ENCODE measurements at regions of chr6 and their contacts with region 1.

Region 1: GRCh38 chr6:159789377-159790148 is at the start of gene TCP1:
- H3K4me3 ChIP-seq: peak within 1 kb of the TSS; percentile 98
- H3K27ac ChIP-seq: peak within 1 kb of the TSS; percentile 66
- H3K4me1 ChIP-seq: peaks cover 8% of the 10 kb centered on the region
- CTCF ChIP-seq: no peak

Region 2: DNA sequence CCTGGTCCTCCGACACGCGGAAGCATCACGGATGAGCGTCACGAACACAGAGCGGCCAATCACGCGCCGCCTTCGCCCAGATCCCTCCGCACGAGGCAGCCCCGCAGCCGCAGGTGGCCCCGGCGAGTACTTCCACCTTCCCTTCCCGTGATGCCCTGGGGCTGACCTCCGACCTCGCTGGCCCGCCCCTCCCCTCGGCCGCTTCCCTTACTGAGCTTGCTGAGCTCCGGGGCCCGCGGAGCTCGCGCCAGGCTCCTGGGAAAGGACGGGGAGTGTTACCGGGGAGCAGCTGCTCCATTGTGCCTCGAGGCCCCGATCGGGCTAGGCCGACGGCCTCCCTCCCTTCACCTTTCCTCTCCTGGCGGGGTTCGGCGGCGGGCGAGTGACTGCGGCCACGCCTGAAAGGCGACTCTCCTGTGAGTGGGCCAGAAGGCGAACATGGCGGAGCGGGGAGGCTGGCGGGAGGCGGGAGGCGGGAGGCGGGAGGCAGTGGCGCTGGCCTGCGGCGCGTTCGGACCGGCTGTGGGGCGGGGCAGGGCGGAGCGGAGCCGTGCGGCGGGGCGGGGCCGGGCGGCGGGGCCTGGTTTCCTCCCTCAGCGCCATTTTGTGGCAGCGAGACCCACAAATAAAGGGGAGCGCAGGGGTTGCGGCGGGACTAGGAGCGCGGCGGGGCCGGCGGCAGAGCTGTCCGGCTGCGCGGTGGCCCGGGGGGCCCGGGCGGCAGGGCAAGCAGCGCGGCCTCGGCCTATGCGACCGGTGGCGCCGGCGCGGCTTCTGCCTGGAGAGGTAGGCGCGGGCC is 62.4 kb before region 1 on chr6 and contains the start of gene WTAP:
- CTCF ChIA-PET with region 1: no interaction called
- POLR2A ChIA-PET with region 1: interaction called, 115 read pairs
- H3K4me3 ChIP-seq: peak within 1 kb of the TSS; percentile 91
- H3K27ac ChIP-seq: peak within 1 kb of the TSS; percentile 99
- H3K4me1 ChIP-seq: peaks cover 7% of the 10 kb centered on the region; the same call in 1 of the 2 replicates
- CTCF ChIP-seq: peak; percentile 59; the same call in 1 of the 2 replicates

Region 3: DNA sequence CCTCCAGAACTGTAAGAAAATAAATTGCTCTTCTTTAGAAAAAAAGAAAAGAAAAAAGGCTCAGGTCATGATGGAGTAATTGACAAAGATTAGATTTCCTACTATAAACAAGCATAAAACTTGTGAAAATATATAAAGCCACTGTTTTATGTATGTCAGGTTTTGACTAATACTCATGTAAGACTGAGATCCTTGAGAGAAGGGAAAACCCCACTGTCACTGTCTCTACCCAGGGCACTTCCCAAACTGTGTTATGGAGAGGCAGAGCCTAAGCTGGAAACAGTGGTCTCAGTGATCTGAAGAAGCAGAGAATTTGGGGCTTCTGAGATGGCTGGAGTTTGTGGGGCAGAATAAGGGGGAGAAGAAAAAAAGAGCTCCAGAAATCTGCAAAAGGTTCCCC is 20.1 kb before region 1 on chr6:
- CTCF ChIA-PET with region 1: interaction called, 4 read pairs
- POLR2A ChIA-PET with region 1: interaction called, 88 read pairs
- H3K4me3 ChIP-seq: no peak overlapping the region
- H3K27ac ChIP-seq: no peak overlapping the region
- H3K4me1 ChIP-seq: no peaks in the 10 kb centered on the region
- CTCF ChIP-seq: no peak

Region 4: GRCh38 chr6:159800141-159800865 is 10.7 kb after region 1 on chr6 and contains the start of gene PNLDC1:
- CTCF ChIA-PET with region 1: interaction called, 3 read pairs
- POLR2A ChIA-PET with region 1: interaction called, 47 read pairs
- H3K4me3 ChIP-seq: no peak within 1 kb of the TSS
- H3K27ac ChIP-seq: no peak within 1 kb of the TSS
- H3K4me1 ChIP-seq: no peaks in the 10 kb centered on the region
- CTCF ChIP-seq: no peak

Region 5: DNA sequence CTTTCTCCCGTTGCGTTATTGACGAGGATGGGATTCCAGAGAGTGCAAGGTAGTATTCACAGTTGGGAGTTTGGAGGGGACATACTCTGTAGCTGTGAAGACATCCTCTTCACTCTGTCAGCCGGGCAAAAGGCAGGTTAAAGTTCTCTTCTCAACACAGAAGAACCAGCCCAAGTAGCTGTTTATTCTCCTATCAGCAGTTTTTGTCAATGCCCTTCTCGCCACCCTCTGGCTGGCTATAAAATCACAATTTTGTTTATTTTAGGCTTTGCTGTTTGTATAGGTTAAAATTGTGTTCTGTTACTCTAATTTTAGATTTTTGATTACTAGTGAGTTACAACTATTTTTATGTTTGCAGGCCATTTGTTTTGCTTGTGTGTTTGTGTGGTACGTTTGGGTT is 63.3 kb after region 1 on chr6:
- CTCF ChIA-PET with region 1: interaction called, 4 read pairs
- POLR2A ChIA-PET with region 1: interaction called, 10 read pairs
- H3K4me3 ChIP-seq: no peak overlapping the region
- H3K27ac ChIP-seq: no peak overlapping the region
- H3K4me1 ChIP-seq: no peaks in the 10 kb centered on the region
- CTCF ChIP-seq: no peak; the same call in 1 of the 2 replicates